ENCODE measurements at regions of chr19 and their contacts with region 1.

Region 1: GRCh38 chr19:2427429-2428320 is at the start of gene TIMM13:
- DNase-seq: peak; percentile 94 to 100 (median 96)
- ATAC-seq: peak; percentile 92 to 95
- H3K4me3 Mint-ChIP-seq: peak within 1 kb of the TSS; percentile 92 to 98 (median 94)
- H3K27ac Mint-ChIP-seq: peak within 1 kb of the TSS; percentile 95 to 99 (median 97)
- H3K4me1 Mint-ChIP-seq: peaks cover 7 to 21% (median 14%) of the 10 kb centered on the region in 4 donors
- H3K27me3 Mint-ChIP-seq: no peaks in the 10 kb centered on the region
- polyA plus RNA-seq, gene TIMM13: 74.4 to 92.2 (median 83.0) TPM

Region 2: GRCh38 chr19:2391118-2391725 is 36.5 kb before region 1 on chr19:
- POLR2A ChIA-PET with region 1: interaction called, 15 read pairs
- DNase-seq: peak in 8 of 10 donors; percentile 36 to 76 (median 48)
- ATAC-seq: peak; percentile 49 to 57
- H3K4me3 Mint-ChIP-seq: no peak overlapping the region
- H3K27ac Mint-ChIP-seq: peak overlapping the region in 3 of 10 donors; percentile 66 to 74 (median 73)
- H3K4me1 Mint-ChIP-seq: peaks cover 3 to 16% (median 5%) of the 10 kb centered on the region in 4 donors
- H3K27me3 Mint-ChIP-seq: peaks cover 0 to 6% (median 0%) of the 10 kb centered on the region in 5 donors

Region 3: DNA sequence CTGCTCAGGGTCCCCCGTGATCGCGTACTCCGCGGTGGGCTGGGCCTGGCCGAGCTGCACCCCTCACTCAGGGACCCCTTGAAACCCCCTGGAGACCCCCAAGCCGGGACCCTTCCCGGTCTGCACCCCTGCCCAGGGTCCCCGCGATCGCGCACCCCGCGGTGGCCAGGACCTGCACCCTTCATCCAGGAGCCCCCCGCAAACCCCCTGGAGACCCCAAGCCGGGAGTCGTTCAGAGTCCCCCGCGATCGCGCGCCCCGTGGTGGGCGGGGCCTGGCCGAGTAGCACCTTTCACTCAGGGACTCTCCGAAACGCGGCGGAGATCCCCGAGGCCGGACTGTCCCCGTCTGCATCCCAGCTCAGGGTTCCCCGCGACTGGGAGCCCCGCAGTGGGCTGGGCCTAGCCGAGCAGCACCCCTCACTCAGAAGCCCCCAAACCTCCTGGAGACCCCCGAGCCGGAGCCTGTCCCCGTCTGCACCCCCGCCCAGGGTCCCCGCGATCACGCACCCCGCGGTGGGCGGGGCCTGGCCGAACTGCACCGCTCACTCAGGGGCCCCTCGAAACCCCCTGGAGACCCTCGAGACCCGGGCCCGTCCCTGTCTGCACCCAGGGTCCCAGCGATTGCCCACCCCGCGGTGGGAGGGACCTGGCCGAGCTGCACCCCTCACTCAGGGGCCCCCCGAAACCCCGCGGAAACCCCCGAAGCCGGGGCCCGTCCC is 28.3 kb after region 1 on chr19:
- POLR2A ChIA-PET with region 1: interaction called, 19 read pairs
- DNase-seq: peak in 8 of 10 donors; percentile 8 to 56 (median 34)
- ATAC-seq: peak; percentile 32 to 40
- H3K4me3 Mint-ChIP-seq: peak overlapping the region; percentile 69 to 91 (median 79)
- H3K27ac Mint-ChIP-seq: peak overlapping the region in 8 of 10 donors; percentile 13 to 92 (median 83)
- H3K4me1 Mint-ChIP-seq: peaks cover 10 to 24% (median 12%) of the 10 kb centered on the region in 4 donors
- H3K27me3 Mint-ChIP-seq: peaks cover 0 to 4% (median 0%) of the 10 kb centered on the region in 5 donors

Region 4: GRCh38 chr19:2627319-2627829 is 199.7 kb after region 1 on chr19:
- POLR2A ChIA-PET with region 1: interaction called, 13 read pairs
- DNase-seq: peak in 2 of 10 donors; percentile 34 to 60
- ATAC-seq: peak in 1 of 2 donors; percentile 24
- H3K4me3 Mint-ChIP-seq: peak overlapping the region in 2 of 10 donors; percentile 24 to 73
- H3K27ac Mint-ChIP-seq: peak overlapping the region; percentile 56 to 89 (median 82)
- H3K4me1 Mint-ChIP-seq: peaks cover 15 to 83% (median 51%) of the 10 kb centered on the region in 4 donors
- H3K27me3 Mint-ChIP-seq: no peaks in the 10 kb centered on the region